ENCODE measurements at regions of chr13 and their contacts with region 1.

Region 1: GRCh38 chr13:43433691-43434141 is 353.1 kb downstream of the ENOX1 start:
- DNase-seq: peak; percentile 79 to 83
- ATAC-seq: peak; percentile 90
- H3K4me3 ChIP-seq: no peak overlapping the region
- H3K27ac ChIP-seq: peak overlapping the region; percentile 69 to 83 (median 79)
- H3K4me1 ChIP-seq: peaks cover 36% of the 10 kb centered on the region in 2 donors
- H3K27me3 ChIP-seq: no peaks in the 10 kb centered on the region
- CTCF ChIP-seq: peak in 1 of 5 experiments; percentile 6
- POLR2A ChIP-seq: no peak

Region 2: DNA sequence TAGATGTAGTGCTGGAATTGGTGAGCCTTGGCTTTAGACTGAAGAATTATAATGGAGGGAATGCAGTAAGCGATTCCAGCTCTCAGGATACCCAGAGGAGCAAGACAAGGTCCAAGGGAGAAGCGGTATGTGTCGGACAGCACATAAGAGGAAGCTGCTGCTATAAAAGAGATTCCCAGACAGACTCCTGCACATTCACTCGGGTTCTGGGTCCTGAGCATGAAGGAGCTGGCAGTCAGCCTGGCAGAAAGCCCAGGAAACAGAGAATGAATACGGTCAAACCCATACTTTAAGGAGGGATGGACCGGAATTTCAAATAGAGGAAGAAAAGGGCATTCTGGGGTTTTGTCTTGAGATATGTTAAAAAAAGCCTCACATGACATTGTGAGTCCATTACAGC is 102.0 kb before region 1 on chr13:
- in situ Hi-C with region 1: loop called in 1 of 4 experiments (anchors 10 kb)
- intact Hi-C with region 1: no loop called
- DNase-seq: no peak
- ATAC-seq: no peak
- H3K4me3 ChIP-seq: no peak overlapping the region
- H3K27ac ChIP-seq: no peak overlapping the region
- H3K4me1 ChIP-seq: peaks cover 8 to 12% of the 10 kb centered on the region in 2 donors
- H3K27me3 ChIP-seq: no peaks in the 10 kb centered on the region
- CTCF ChIP-seq: no peak
- POLR2A ChIP-seq: no peak

Region 3: DNA sequence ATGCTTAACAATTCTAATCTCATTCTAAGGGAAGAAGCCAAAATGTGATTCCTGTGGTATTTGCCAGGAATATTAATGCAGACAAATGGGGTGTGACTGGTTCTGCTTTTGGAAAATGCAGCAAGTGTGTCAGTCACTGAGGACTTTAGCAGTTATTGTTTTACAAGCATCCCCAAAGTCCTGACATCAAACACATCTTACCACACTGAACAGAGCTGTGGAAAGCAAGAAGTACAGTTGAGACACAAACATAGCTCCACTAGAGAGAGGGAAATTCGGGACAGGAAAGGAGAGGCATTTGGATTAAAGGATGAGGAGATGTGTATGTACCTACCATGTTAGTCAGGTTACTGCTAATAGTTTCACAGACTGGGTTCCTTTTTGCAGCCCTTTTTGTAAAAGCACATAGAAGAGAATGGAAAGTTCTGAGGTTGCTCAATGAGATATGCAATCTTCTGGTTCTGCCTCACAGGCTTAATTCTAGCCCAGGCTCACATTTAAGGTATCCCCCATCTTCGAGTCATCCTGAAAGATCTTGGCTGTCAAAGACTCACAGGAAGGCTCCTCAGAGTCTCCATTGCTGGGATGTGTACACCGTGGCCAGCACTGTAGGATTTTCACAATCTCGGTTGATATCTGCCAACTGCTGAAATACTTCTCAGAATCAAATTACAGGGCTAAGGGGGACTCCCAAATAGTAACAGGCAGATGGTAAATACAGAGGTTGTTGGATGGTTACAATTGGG is 93.7 kb before region 1 on chr13:
- in situ Hi-C with region 1: loop called in 1 of 4 experiments (anchors 10 kb)
- intact Hi-C with region 1: loop called (anchors 2 kb)
- DNase-seq: peak; percentile 58 to 67
- ATAC-seq: peak; percentile 85 to 86
- H3K4me3 ChIP-seq: no peak overlapping the region
- H3K27ac ChIP-seq: peak overlapping the region; percentile 73 to 86 (median 84)
- H3K4me1 ChIP-seq: peaks cover 23 to 46% of the 10 kb centered on the region in 2 donors
- H3K27me3 ChIP-seq: no peaks in the 10 kb centered on the region
- CTCF ChIP-seq: no peak
- POLR2A ChIP-seq: no peak

Region 4: GRCh38 chr13:43411741-43412140 is 22.0 kb before region 1 on chr13:
- in situ Hi-C with region 1: no loop called
- intact Hi-C with region 1: loop called (anchors 1 kb)
- DNase-seq: peak; percentile 89 to 93
- ATAC-seq: peak; percentile 80 to 85
- H3K4me3 ChIP-seq: no peak overlapping the region
- H3K27ac ChIP-seq: peak overlapping the region; percentile 53 to 90 (median 65)
- H3K4me1 ChIP-seq: peaks cover 23 to 26% of the 10 kb centered on the region in 2 donors
- H3K27me3 ChIP-seq: no peaks in the 10 kb centered on the region
- CTCF ChIP-seq: no peak
- POLR2A ChIP-seq: peak in 1 of 2 donors; percentile 12

Region 5: GRCh38 chr13:43611281-43612273 is 177.9 kb after region 1 on chr13:
- in situ Hi-C with region 1: no loop called
- intact Hi-C with region 1: loop called (anchors 5 kb)
- DNase-seq: no peak
- ATAC-seq: peak in 1 of 2 donors; percentile 52
- H3K4me3 ChIP-seq: no peak overlapping the region
- H3K27ac ChIP-seq: peak overlapping the region in 1 of 4 donors; percentile 41
- H3K4me1 ChIP-seq: peaks cover 35 to 47% of the 10 kb centered on the region in 2 donors
- H3K27me3 ChIP-seq: no peaks in the 10 kb centered on the region
- CTCF ChIP-seq: no peak
- POLR2A ChIP-seq: no peak

Region 6: DNA sequence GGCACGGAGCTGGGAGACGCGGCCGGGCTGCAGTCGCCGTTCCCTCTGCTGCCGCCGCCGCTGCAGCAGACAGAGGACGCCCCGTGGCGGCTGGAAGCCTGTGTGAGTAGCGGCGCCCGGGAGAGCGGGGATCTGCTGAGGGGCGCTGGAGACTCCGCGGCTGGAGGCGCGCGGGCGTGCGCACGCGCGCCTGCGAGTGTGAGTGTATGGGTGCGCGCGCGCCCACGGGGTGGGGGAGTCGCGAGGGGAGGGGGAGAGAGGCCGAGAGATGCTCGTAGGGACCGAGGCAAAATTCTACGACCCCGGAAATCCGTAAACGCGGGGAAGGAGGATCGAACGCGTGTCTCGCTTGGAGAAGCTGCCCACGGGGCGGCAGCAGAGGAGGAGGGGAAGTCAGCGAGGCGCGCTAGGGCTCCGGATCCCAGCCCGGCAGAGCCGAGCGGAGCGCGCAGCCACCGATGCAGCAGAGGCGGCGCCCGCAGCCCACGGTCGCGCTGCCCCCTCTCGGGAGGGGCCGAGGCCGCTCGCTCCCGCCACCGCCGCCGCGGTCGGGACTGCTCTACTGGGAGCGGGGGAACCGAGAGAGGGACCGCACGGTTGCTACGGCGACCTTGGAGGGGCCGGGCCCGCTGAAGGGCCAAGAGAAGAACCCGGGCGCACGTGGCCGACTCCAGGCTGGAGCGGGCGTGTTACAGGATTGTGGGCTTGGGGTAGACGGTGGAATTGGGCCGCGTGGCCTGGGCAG is 353.2 kb after region 1 on chr13 and contains the start of gene ENOX1:
- in situ Hi-C with region 1: no loop called
- intact Hi-C with region 1: loop called (anchors 10 kb)
- DNase-seq: peak in 1 of 2 donors; percentile 39
- ATAC-seq: peak; percentile 60 to 62
- H3K4me3 ChIP-seq: peak within 1 kb of the TSS; percentile 60 to 90 (median 68)
- H3K27ac ChIP-seq: peak within 1 kb of the TSS; percentile 63 to 74 (median 70)
- H3K4me1 ChIP-seq: peaks cover 9 to 21% of the 10 kb centered on the region in 2 donors
- H3K27me3 ChIP-seq: peaks cover 0 to 4% (median 0%) of the 10 kb centered on the region in 3 donors
- CTCF ChIP-seq: peak in 1 of 5 experiments; percentile 32
- POLR2A ChIP-seq: peak in 1 of 2 donors; percentile 17
- total RNA-seq, gene ENOX1: 0.46 to 3.5 (median 1.8) TPM